Tibial artery (tissue), 4 donors: ENCODE measurements at regions of chr10 and their contacts with region 1.

Region 1: DNA sequence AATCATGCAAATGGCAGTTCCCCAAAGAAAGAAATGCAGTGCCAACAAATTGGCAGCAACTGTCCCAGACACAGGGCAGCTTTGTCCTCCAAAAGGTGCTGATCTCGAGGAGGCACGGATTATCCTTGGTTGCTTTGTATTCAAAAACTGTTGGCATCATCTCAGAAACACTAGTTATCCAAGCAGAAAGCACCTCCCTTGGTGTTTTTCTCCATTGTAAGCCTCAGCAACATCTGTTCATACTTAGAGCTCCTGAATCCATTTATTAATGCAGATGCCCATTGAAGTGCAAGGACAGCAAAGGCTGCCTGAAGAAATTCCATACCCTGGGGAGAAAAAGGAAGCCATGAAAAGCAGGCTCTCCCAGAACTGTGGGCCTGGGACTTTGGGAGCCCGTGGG is 1.1 kb upstream of the NPS start:
- DNase-seq: no peak
- H3K4me3 ChIP-seq: no peak overlapping the region
- H3K27ac ChIP-seq: no peak overlapping the region
- H3K4me1 ChIP-seq: no peaks in the 10 kb centered on the region
- H3K27me3 ChIP-seq: no peaks in the 10 kb centered on the region
- CTCF ChIP-seq: no peak

Region 2: DNA sequence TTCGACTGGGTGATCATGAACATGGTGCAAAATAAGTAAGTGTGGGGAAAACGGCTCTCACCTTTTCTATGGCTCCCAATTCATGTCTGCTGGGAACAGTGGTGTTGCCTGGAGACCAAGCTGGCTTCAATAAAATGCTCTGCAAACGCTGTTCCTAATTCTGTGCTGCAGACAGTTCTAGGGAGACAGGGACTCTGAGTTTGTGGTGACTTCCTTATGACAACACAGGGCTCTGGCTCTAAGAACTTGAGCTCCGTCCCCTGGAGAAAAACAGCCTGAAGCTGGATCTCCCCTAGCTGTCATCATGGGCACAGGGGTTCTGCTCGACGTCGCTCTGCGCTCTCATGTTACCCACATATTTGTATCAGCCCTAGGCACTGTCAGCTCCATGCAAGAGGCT is 290.6 kb before region 1 on chr10:
- intact Hi-C with region 1: no loop called
- DNase-seq: no peak
- H3K4me3 ChIP-seq: no peak overlapping the region
- H3K27ac ChIP-seq: no peak overlapping the region
- H3K4me1 ChIP-seq: no peaks in the 10 kb centered on the region
- H3K27me3 ChIP-seq: no peaks in the 10 kb centered on the region
- CTCF ChIP-seq: no peak

Region 3: GRCh38 chr10:127462643-127463285 is 85.3 kb before region 1 on chr10:
- intact Hi-C with region 1: no loop called
- DNase-seq: no peak
- H3K4me3 ChIP-seq: no peak overlapping the region
- H3K27ac ChIP-seq: no peak overlapping the region
- H3K4me1 ChIP-seq: no peaks in the 10 kb centered on the region
- H3K27me3 ChIP-seq: peaks cover 0 to 8% of the 10 kb centered on the region in 2 donors
- CTCF ChIP-seq: no peak

Region 4: DNA sequence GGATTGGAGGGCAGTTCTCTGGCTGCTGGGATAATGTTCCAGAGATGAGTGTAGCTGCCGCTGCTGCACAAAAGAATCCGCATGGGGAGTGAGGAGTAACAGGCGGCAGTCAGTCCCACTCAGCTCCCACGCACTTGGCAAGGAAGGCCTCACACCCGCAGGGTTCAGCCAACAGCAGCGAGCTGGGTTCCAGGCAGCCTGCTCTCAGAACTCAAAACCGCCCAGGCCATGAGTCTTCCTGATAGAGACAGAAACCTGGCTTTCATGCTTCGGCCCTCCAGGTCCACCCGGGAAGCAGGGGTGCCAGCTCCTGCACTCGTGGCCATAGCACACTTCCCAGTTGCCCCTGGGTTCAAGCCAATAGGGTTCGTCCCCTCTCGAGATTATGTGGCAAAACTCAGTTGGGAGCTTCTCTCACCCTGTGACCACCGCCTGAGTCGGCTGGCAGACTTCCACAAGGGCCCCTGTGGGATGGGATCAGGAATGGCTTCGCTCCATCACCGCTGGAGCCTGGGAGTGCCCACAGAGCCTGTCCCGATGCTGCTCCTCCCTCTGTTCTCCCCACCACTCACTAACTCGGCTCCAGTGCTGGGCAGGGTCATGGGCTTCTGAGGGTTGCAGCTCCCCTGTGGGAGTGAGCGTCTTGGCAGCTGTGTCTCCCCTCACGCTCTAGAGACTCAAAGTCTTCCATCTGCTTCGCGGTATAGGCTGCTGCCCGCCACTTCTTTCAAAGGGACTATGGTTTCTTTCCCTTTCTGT is 324.2 kb after region 1 on chr10:
- intact Hi-C with region 1: no loop called
- DNase-seq: no peak
- H3K4me3 ChIP-seq: no peak overlapping the region
- H3K27ac ChIP-seq: no peak overlapping the region
- H3K4me1 ChIP-seq: peaks cover 0 to 10% (median 2%) of the 10 kb centered on the region in 4 donors
- H3K27me3 ChIP-seq: peaks cover 0 to 9% of the 10 kb centered on the region in 2 donors
- CTCF ChIP-seq: no peak

Region 5: GRCh38 chr10:128324077-128324827 is 776.2 kb after region 1 on chr10:
- intact Hi-C with region 1: loop called (anchors 5 kb)
- DNase-seq: peak in 1 of 2 donors; percentile 42
- H3K4me3 ChIP-seq: no peak overlapping the region
- H3K27ac ChIP-seq: no peak overlapping the region
- H3K4me1 ChIP-seq: no peaks in the 10 kb centered on the region
- H3K27me3 ChIP-seq: peaks cover 0 to 4% of the 10 kb centered on the region in 2 donors
- CTCF ChIP-seq: peak in 1 of 2 experiments; percentile 21